ENCODE measurements at regions of chr18 and their contacts with region 1.

Region 1: DNA sequence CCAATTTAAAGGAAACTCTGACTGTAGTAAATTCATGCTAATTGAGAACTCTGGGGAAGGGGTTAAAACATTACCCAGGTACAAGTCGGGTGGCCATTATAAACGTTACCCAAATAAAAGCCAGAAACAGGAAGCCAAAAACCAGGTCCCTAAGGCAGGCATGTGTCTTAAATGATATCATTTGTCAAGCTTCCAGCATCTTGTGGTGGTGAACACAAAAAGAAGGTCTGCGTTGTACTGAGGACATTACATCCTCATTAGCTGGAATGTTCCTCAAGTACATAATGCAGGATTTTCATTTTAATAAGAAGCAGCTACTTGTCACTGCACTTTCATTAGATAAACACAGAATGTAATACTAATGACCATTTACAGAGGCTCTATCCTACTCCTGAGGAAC is 10.9 kb downstream of the PTGR3 start:
- H3K4me3 Mint-ChIP-seq: no peak overlapping the region
- H3K27ac Mint-ChIP-seq: no peak overlapping the region
- H3K4me1 Mint-ChIP-seq: no peaks in the 10 kb centered on the region
- H3K27me3 Mint-ChIP-seq: no peaks in the 10 kb centered on the region

Region 2: GRCh38 chr18:75478996-75479880 is 281.2 kb after region 1 on chr18:
- intact Hi-C with region 1: loop called (anchors 10 kb)
- H3K4me3 Mint-ChIP-seq: no peak overlapping the region
- H3K27ac Mint-ChIP-seq: no peak overlapping the region
- H3K4me1 Mint-ChIP-seq: peaks cover 6% of the 10 kb centered on the region
- H3K27me3 Mint-ChIP-seq: no peaks in the 10 kb centered on the region